ENCODE measurements at regions of chr17 and their contacts with region 1.

Region 1: GRCh38 chr17:41738077-41738735 is 3.8 kb upstream of the HAP1 start:
- DNase-seq: peak; percentile 80 to 87
- H3K4me3 ChIP-seq: no peak overlapping the region
- H3K27ac ChIP-seq: no peak overlapping the region
- H3K4me1 ChIP-seq: peaks cover 0 to 7% of the 10 kb centered on the region in 2 donors
- H3K27me3 ChIP-seq: peaks cover 11 to 12% of the 10 kb centered on the region in 2 donors
- CTCF ChIP-seq: peak; percentile 95 to 98 (median 98)
- POLR2A ChIP-seq: peak in 1 of 2 donors; percentile 27

Region 2: GRCh38 chr17:41642252-41643156 is 95.7 kb before region 1 on chr17:
- intact Hi-C with region 1: no loop called
- DNase-seq: no peak
- H3K4me3 ChIP-seq: no peak overlapping the region
- H3K27ac ChIP-seq: no peak overlapping the region
- H3K4me1 ChIP-seq: no peaks in the 10 kb centered on the region
- H3K27me3 ChIP-seq: no peaks in the 10 kb centered on the region
- CTCF ChIP-seq: no peak
- POLR2A ChIP-seq: no peak

Region 3: DNA sequence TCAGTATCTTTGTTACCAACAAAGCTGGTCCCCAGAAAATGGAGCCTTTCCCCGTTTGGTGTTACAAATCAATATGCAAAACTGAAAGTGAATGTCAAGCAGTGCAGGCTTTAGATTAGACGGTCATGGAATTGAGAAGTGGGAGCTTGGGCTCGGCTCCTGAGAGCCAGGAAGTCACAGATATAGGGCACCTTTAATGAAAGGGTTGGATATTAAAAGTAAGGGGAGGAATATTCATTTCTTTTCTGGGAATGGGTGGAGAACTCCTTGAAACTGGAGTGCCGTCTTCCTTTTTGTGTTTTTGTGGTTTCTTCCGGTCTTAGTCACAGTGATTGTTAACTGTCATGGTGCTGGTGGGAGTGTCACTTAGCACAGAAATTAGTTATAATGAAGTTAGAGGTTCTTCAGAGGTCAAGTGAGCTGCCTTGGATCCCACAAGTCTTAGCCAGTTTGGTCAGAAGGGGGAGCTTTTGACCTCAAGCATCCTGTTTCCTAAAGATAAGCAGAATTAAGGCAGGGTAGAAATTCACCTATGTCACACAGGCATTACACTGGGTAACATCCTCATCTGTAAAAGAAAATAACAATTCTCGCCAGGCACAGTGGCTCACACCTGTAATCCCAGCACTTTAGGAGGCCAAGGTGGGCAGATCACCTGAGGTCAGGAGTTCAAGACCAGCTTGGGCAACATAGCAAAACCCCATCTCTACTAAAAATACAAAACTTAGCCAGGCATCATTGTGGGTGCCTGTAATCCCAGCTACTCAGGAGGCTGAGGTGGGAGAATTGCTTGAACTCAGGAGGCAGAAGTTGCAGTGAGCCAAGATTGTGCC is 59.1 kb before region 1 on chr17:
- intact Hi-C with region 1: no loop called
- DNase-seq: no peak
- H3K4me3 ChIP-seq: no peak overlapping the region
- H3K27ac ChIP-seq: peak overlapping the region; percentile 45 to 74
- H3K4me1 ChIP-seq: no peaks in the 10 kb centered on the region
- H3K27me3 ChIP-seq: no peaks in the 10 kb centered on the region
- CTCF ChIP-seq: no peak
- POLR2A ChIP-seq: no peak

Region 4: GRCh38 chr17:41801374-41802271 is 63.4 kb after region 1 on chr17:
- intact Hi-C with region 1: loop called (anchors 2 kb)
- DNase-seq: peak; percentile 84
- H3K4me3 ChIP-seq: no peak overlapping the region
- H3K27ac ChIP-seq: peak overlapping the region in 1 of 2 donors; percentile 45
- H3K4me1 ChIP-seq: peaks cover 0 to 9% of the 10 kb centered on the region in 2 donors
- H3K27me3 ChIP-seq: no peaks in the 10 kb centered on the region
- CTCF ChIP-seq: peak; percentile 97 to 98 (median 98)
- POLR2A ChIP-seq: peak in 1 of 2 donors; percentile 14